Heart left ventricle (tissue), 16 donors: ENCODE measurements at regions of chr1 and their contacts with region 1.

Region 1: DNA sequence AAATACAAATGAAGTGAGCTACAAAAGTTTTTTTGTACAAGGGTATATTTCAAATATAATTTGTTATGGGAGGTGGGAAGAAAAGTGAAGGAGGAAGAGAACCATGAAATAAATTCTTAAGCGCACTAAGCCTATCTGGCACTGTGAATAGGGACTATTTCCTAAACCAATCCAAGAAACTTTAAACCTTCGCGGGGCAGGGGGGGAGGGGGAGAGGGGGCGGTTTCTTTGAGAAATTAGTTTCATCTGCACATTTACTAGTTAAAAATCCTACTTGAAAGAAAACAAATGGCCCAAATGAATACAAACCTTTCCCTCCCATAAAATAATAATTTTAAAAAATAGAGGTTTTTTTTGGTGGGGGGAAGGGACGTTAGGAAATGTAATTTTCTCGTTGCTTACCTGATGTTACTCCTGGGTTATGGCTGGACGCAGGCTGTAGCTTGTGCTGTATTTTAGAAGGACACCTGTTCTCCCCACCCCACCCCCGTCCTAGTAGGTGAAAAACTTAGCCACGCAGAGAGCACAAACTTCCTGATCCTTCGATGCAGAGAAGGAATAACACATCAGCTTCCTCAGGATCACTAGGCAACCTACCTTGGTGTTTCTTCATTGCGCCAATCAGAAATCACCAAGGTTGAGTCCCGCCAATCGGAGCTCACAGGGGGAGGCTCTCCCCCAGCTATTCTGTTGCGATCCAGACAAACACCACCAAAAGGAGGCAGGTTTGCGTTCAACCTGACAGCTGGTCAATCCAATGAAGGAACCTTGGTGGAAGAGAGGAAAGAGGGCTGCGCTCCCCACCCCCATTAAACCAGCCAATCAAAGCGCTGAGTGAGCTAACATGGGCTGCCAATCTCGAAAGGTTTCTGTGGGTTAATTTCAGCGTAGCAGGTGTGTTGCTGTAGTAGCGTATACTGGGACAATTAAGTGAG is at the start of gene GOLPH3L:
- DNase-seq: peak; percentile 85 to 95 (median 95)
- ATAC-seq: peak; percentile 100
- H3K4me3 ChIP-seq: peak within 1 kb of the TSS; percentile 51 to 85 (median 73)
- H3K27ac ChIP-seq: peak within 1 kb of the TSS in 11 of 12 donors; percentile 32 to 78 (median 57)
- H3K4me1 ChIP-seq: peaks cover 0 to 24% (median 13%) of the 10 kb centered on the region in 12 donors
- H3K27me3 ChIP-seq: no peaks in the 10 kb centered on the region
- CTCF ChIP-seq: peak in 5 of 12 donors; percentile 18 to 52 (median 34)
- POLR2A ChIP-seq: peak in 1 of 2 donors; percentile 54
- total RNA-seq, gene GOLPH3L: 11.4 to 22.1 (median 14.7) TPM

Region 2: GRCh38 chr1:150629115-150629928 is 67.5 kb before region 1 on chr1 and contains the start of gene ENSA:
- intact Hi-C with region 1: loop called in 1 of 10 experiments (anchors 5 kb)
- DNase-seq: peak; percentile 97 to 100 (median 98)
- ATAC-seq: peak; percentile 97 to 98 (median 97)
- H3K4me3 ChIP-seq: peak within 1 kb of the TSS; percentile 15 to 85 (median 70)
- H3K27ac ChIP-seq: peak within 1 kb of the TSS; percentile 85 to 99 (median 96)
- H3K4me1 ChIP-seq: peaks cover 3 to 35% (median 21%) of the 10 kb centered on the region in 12 donors
- H3K27me3 ChIP-seq: no peaks in the 10 kb centered on the region
- CTCF ChIP-seq: no peak
- POLR2A ChIP-seq: peak; percentile 82 to 85
- total RNA-seq, gene ENSA: 118 to 186 (median 130) TPM

Region 3: GRCh38 chr1:150798525-150798924 is 101.7 kb after region 1 on chr1:
- intact Hi-C with region 1: no loop called
- DNase-seq: no peak
- ATAC-seq: no peak
- H3K4me3 ChIP-seq: no peak overlapping the region
- H3K27ac ChIP-seq: no peak overlapping the region
- H3K4me1 ChIP-seq: peaks cover 0 to 9% (median 0%) of the 10 kb centered on the region in 12 donors
- H3K27me3 ChIP-seq: no peaks in the 10 kb centered on the region
- CTCF ChIP-seq: no peak
- POLR2A ChIP-seq: no peak

Region 4: GRCh38 chr1:151210830-151211229 is 514.0 kb after region 1 on chr1:
- intact Hi-C with region 1: no loop called
- DNase-seq: no peak
- ATAC-seq: no peak
- H3K4me3 ChIP-seq: no peak overlapping the region
- H3K27ac ChIP-seq: no peak overlapping the region
- H3K4me1 ChIP-seq: peaks cover 0 to 27% (median 6%) of the 10 kb centered on the region in 12 donors
- H3K27me3 ChIP-seq: no peaks in the 10 kb centered on the region
- CTCF ChIP-seq: no peak
- POLR2A ChIP-seq: no peak